B cell (primary cell): ENCODE measurements at regions of chr19 and their contacts with region 1.

Region 1: DNA sequence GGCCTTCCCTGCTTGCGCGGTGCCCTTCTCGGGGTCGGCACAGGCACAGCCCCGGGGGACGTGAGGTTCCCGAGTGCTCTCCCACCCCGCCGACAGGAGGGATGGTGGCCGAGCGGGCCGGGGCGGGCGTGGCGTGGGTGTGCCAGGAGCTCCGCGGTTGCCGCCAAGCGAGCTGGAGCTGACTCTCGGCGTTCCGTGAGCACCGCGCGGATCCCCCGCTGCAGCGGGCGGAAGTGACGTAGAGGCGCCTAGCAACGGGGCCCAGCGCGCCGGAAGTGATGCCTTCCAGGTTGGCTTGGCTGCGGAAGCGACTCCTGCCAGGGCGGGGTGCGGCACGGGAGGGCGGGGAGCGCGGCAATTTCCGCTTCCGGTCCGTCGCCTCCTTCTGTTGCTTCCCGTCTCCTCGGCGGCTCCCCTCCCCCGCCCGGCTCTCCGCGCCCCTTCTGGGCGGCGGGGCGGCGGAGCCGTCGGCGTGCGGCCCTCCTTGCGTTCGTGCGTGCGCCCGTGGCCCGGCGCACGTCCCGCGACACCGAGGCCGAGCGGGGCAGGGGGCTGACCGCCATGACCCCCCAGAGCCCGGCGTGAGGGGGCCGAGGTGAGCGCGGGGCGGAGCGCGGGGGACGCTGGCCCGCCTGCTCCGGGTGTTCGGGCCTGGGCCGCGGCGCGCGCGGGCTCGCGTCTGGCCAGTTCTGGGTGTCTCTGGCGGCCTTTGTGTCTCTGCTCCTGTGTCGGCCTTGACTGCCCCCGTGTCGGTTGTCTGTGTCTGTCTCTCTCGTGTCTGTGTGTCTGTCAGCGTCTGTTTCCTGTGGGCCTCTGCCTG is at the start of gene EPN1:
- DNase-seq: peak; percentile 98
- ATAC-seq: peak; percentile 63
- H3K4me3 ChIP-seq: peak within 1 kb of the TSS; percentile 64 to 93 (median 77)
- H3K4me3 Mint-ChIP-seq: peak within 1 kb of the TSS; percentile 95
- H3K27ac ChIP-seq: peak within 1 kb of the TSS; percentile 87 to 93
- H3K27ac Mint-ChIP-seq: peak within 1 kb of the TSS; percentile 91
- H3K4me1 ChIP-seq: peaks cover 44 to 59% of the 10 kb centered on the region in 2 donors
- H3K4me1 Mint-ChIP-seq: peaks cover 70% of the 10 kb centered on the region
- H3K27me3 ChIP-seq: no peaks in the 10 kb centered on the region
- H3K27me3 Mint-ChIP-seq: no peaks in the 10 kb centered on the region
- CTCF ChIP-seq: no peak
- total RNA-seq, gene EPN1: 63.8 and 63.9 TPM in 2 replicates

Region 2: GRCh38 chr19:54203151-54203611 is 1471.9 kb before region 1 on chr19:
- CTCF ChIA-PET with region 1: no interaction called
- POLR2A ChIA-PET with region 1: no interaction called
- intact Hi-C with region 1: loop called (anchors 5 kb)
- DNase-seq: peak; percentile 23
- ATAC-seq: no peak
- H3K4me3 ChIP-seq: no peak overlapping the region
- H3K4me3 Mint-ChIP-seq: peak overlapping the region; percentile 96
- H3K27ac ChIP-seq: no peak overlapping the region
- H3K27ac Mint-ChIP-seq: peak overlapping the region; percentile 46
- H3K4me1 ChIP-seq: peaks cover 46 to 66% of the 10 kb centered on the region in 2 donors
- H3K4me1 Mint-ChIP-seq: peaks cover 71% of the 10 kb centered on the region
- H3K27me3 ChIP-seq: no peaks in the 10 kb centered on the region
- H3K27me3 Mint-ChIP-seq: no peaks in the 10 kb centered on the region
- CTCF ChIP-seq: no peak

Region 3: DNA sequence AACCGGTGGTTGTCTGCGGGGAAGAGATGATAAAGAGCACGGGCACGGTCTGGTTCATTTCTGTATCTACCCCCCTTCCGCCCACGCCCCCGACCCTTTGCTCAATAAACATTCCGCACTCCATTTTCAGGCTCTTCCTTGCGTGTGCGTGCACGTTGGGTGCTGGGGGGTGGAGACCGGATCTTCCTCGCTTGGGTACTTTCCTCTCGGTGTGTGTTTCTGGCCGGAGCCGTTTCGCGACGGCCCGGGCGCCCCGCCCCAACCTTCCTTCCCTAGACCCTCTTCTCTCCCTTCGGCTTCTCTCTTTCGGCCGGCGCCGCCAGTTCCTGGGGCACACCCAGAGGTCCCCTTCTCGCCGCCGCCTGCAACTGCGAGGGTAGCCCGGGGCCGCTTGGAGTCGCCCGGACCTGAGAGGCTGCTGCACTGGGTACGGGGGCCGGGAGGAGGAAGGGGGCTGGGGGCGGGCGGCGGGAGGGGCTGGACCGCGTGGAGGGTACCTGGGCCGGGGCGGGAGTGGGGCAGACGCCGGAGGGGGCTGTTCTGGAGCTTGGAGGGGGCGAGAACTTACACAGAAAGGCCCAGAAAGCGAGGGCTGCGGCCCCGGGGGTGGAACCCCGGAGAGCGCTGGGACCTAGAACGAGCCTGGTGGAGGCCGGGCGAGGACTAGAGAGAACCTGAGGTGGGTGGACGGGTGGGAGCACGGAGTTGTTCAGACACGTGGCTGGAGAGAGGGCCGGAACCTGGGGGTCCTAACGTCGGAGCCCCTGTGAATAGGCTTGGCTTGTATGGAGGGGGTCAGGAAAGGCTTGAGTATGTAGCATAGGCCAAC is 31.5 kb before region 1 on chr19 and contains the start of gene ZNF581:
- CTCF ChIA-PET with region 1: interaction called, 6 read pairs
- POLR2A ChIA-PET with region 1: interaction called, 6 read pairs
- intact Hi-C with region 1: loop called (anchors 5 kb)
- DNase-seq: peak; percentile 90
- ATAC-seq: peak; percentile 36
- H3K4me3 ChIP-seq: peak within 1 kb of the TSS; percentile 59 to 85 (median 78)
- H3K4me3 Mint-ChIP-seq: peak within 1 kb of the TSS; percentile 88
- H3K27ac ChIP-seq: peak within 1 kb of the TSS; percentile 79 to 82
- H3K27ac Mint-ChIP-seq: peak within 1 kb of the TSS; percentile 98
- H3K4me1 ChIP-seq: peaks cover 32 to 68% of the 10 kb centered on the region in 2 donors
- H3K4me1 Mint-ChIP-seq: peaks cover 60% of the 10 kb centered on the region
- H3K27me3 ChIP-seq: no peaks in the 10 kb centered on the region
- H3K27me3 Mint-ChIP-seq: no peaks in the 10 kb centered on the region
- CTCF ChIP-seq: no peak
- total RNA-seq, gene ZNF581: 47.3 and 51.3 TPM in 2 replicates

Region 4: GRCh38 chr19:55653758-55654539 is 21.1 kb before region 1 on chr19:
- CTCF ChIA-PET with region 1: interaction called, 6 read pairs
- POLR2A ChIA-PET with region 1: interaction called, 8 read pairs
- intact Hi-C with region 1: loop called (anchors 1 kb)
- DNase-seq: peak; percentile 100
- ATAC-seq: peak; percentile 77
- H3K4me3 ChIP-seq: peak overlapping the region; percentile 66 to 98 (median 92)
- H3K4me3 Mint-ChIP-seq: peak overlapping the region; percentile 93
- H3K27ac ChIP-seq: peak overlapping the region; percentile 98 to 100
- H3K27ac Mint-ChIP-seq: peak overlapping the region; percentile 96
- H3K4me1 ChIP-seq: peaks cover 41 to 53% of the 10 kb centered on the region in 2 donors
- H3K4me1 Mint-ChIP-seq: peaks cover 56% of the 10 kb centered on the region
- H3K27me3 ChIP-seq: no peaks in the 10 kb centered on the region
- H3K27me3 Mint-ChIP-seq: no peaks in the 10 kb centered on the region
- CTCF ChIP-seq: peak; percentile 100

Region 5: GRCh38 chr19:55693336-55693974 is 18.4 kb after region 1 on chr19:
- CTCF ChIA-PET with region 1: no interaction called
- POLR2A ChIA-PET with region 1: no interaction called
- intact Hi-C with region 1: no loop called
- DNase-seq: no peak
- ATAC-seq: no peak
- H3K4me3 ChIP-seq: no peak overlapping the region
- H3K4me3 Mint-ChIP-seq: no peak overlapping the region
- H3K27ac ChIP-seq: no peak overlapping the region
- H3K27ac Mint-ChIP-seq: no peak overlapping the region
- H3K4me1 ChIP-seq: peaks cover under 1 to 6% of the 10 kb centered on the region in 2 donors
- H3K4me1 Mint-ChIP-seq: peaks cover 11% of the 10 kb centered on the region
- H3K27me3 ChIP-seq: no peaks in the 10 kb centered on the region
- H3K27me3 Mint-ChIP-seq: no peaks in the 10 kb centered on the region
- CTCF ChIP-seq: no peak

Region 6: GRCh38 chr19:55809381-55810058 is 134.5 kb after region 1 on chr19:
- CTCF ChIA-PET with region 1: interaction called, 7 read pairs
- POLR2A ChIA-PET with region 1: no interaction called
- intact Hi-C with region 1: loop called (anchors 1 kb)
- DNase-seq: peak; percentile 83
- ATAC-seq: peak; percentile 91
- H3K4me3 ChIP-seq: peak overlapping the region in 2 of 5 experiments; percentile 24 to 25
- H3K4me3 Mint-ChIP-seq: peak overlapping the region; percentile 72
- H3K27ac ChIP-seq: no peak overlapping the region
- H3K27ac Mint-ChIP-seq: peak overlapping the region; percentile 80
- H3K4me1 ChIP-seq: peaks cover 4 to 9% of the 10 kb centered on the region in 2 donors
- H3K4me1 Mint-ChIP-seq: peaks cover 10% of the 10 kb centered on the region
- H3K27me3 ChIP-seq: peaks cover 0 to 3% (median 0%) of the 10 kb centered on the region in 4 experiments
- H3K27me3 Mint-ChIP-seq: peaks cover 26% of the 10 kb centered on the region
- CTCF ChIP-seq: peak; percentile 78

Region 7: DNA sequence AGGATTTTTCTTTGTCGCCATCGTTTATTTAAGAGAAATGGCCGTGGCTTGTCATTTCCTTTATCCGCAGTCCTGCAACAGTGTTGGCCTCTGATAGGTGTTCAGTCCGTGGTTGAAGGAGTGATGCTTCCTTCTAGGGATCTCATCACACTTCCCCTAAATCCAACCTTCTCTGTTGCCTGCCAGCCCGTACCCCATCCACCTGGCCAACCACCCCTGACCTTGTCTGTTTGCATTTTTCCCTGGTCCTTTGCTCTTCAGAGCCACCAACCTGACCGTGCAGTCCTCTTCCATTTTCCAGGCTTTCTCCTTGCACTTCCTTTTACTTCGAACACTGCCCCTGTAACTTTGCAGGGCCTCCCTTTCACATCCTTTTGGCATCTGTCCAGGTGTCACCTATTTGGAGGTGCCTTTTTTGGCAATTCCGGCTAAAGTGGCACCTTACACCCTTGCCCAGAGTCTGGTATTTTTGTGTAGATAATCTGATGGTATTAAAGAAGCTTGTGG is 1605.9 kb after region 1 on chr19:
- CTCF ChIA-PET with region 1: no interaction called
- POLR2A ChIA-PET with region 1: no interaction called
- intact Hi-C with region 1: no loop called
- DNase-seq: no peak
- ATAC-seq: no peak
- H3K4me3 ChIP-seq: peak overlapping the region; percentile 26 to 94 (median 91)
- H3K4me3 Mint-ChIP-seq: no peak overlapping the region
- H3K27ac ChIP-seq: peak overlapping the region; percentile 98 to 100
- H3K27ac Mint-ChIP-seq: no peak overlapping the region
- H3K4me1 ChIP-seq: peaks cover 29 to 33% of the 10 kb centered on the region in 2 donors
- H3K4me1 Mint-ChIP-seq: peaks cover 37% of the 10 kb centered on the region
- H3K27me3 ChIP-seq: no peaks in the 10 kb centered on the region
- H3K27me3 Mint-ChIP-seq: no peaks in the 10 kb centered on the region
- CTCF ChIP-seq: no peak